ENCODE measurements at regions of chr6 and their contacts with region 1.

Region 1: DNA sequence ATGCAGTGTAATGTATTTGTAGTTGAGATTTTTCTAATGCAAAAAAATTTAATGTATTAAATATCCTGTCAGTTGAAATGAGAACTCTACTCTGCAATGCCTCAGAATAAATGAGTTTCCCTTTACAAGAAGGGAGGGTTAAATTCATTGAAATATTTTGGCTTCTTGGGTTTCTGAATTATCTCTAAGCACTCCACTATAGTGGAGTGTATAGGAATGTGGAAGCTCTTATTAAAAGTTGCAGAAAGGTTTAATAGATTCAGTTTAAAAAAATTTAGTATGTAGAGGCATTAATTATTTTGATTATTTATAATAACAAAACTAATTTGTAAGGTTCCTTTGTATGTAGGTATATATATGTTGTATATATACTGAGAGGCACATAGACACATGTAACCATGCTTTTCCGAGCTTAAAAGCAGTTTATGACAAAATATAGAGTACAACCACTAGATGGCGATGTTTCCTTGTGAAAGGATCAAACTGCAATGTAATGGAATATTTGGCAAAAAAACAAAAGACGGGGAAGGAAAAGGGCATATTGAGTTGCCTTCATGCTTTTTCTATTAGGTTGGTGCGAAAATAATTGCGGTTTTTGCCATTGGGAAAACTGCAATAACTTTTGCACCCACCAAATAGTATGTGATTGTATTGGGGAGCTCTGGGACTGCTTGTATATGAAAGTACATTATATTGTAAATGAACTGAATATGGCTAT is 144.2 kb downstream of the MYO6 start:
- DNase-seq: peak; percentile 81
- H3K4me3 ChIP-seq: no peak overlapping the region
- H3K27ac ChIP-seq: no peak overlapping the region
- H3K4me1 ChIP-seq: no peaks in the 10 kb centered on the region
- H3K27me3 ChIP-seq: no peaks in the 10 kb centered on the region
- CTCF ChIP-seq: peak; percentile 44 to 51
- POLR2A ChIP-seq: no peak

Region 2: DNA sequence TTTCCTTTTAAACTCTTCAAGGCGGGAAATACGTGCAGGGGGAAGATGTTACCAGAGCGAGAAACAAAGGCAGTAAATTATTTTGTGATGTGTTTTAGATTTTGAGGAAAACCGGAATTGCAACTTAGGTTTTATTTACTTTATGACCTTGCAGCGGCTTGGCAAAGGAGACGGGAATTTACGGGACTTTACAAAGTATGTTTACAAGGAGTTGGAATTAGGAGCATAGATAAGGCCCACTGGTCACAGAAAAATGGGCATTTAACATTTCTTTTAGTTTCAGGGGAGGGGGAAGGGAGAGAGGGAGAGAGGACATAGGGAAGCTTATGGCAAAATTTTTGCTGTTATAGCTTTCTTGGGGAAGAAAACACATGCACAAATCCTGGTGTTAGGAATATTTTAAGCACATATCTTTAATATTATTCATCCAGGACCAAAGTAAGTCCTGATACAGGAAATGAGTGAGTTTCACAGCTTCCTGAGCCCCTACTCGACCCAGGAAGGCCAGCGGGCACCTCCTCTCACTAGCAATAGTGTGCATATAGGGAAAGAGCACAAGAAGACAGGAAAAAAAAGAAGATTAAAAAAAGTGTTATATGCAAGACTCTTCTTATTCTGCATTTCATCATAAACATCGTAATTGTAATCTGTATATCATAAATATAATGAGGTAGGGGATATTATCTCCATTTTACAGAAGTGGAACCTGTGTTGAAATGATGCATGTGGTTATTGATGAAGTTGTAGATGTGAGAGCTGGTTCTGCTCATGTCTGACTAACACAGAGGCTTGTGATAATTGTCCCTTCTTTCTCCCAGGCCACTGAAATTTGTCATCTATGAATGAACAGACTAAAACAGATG is 43.3 kb before region 1 on chr6:
- CTCF ChIA-PET with region 1: interaction called, 10 read pairs
- POLR2A ChIA-PET with region 1: no interaction called
- dilution Hi-C with region 1: no loop called
- intact Hi-C with region 1: no loop called
- DNase-seq: peak; percentile 58
- H3K4me3 ChIP-seq: peak overlapping the region in 1 of 3 experiments; percentile 33
- H3K27ac ChIP-seq: peak overlapping the region; percentile 40
- H3K4me1 ChIP-seq: peaks cover 47% of the 10 kb centered on the region
- H3K27me3 ChIP-seq: no peaks in the 10 kb centered on the region
- CTCF ChIP-seq: no peak
- POLR2A ChIP-seq: no peak

Region 3: GRCh38 chr6:75863001-75863400 is 30.2 kb before region 1 on chr6:
- CTCF ChIA-PET with region 1: interaction called, 20 read pairs
- POLR2A ChIA-PET with region 1: no interaction called
- dilution Hi-C with region 1: no loop called
- intact Hi-C with region 1: no loop called
- DNase-seq: no peak
- H3K4me3 ChIP-seq: no peak overlapping the region
- H3K27ac ChIP-seq: no peak overlapping the region
- H3K4me1 ChIP-seq: no peaks in the 10 kb centered on the region
- H3K27me3 ChIP-seq: no peaks in the 10 kb centered on the region
- CTCF ChIP-seq: no peak
- POLR2A ChIP-seq: no peak

Region 4: GRCh38 chr6:75882734-75883133 is 10.5 kb before region 1 on chr6:
- CTCF ChIA-PET with region 1: interaction called, 87 read pairs
- POLR2A ChIA-PET with region 1: no interaction called
- dilution Hi-C with region 1: no loop called
- intact Hi-C with region 1: no loop called
- DNase-seq: no peak
- H3K4me3 ChIP-seq: no peak overlapping the region
- H3K27ac ChIP-seq: no peak overlapping the region
- H3K4me1 ChIP-seq: no peaks in the 10 kb centered on the region
- H3K27me3 ChIP-seq: no peaks in the 10 kb centered on the region
- CTCF ChIP-seq: no peak
- POLR2A ChIP-seq: no peak

Region 5: GRCh38 chr6:75913040-75913439 is 19.8 kb after region 1 on chr6:
- CTCF ChIA-PET with region 1: interaction called, 21 read pairs
- POLR2A ChIA-PET with region 1: no interaction called
- dilution Hi-C with region 1: no loop called
- intact Hi-C with region 1: no loop called
- DNase-seq: no peak
- H3K4me3 ChIP-seq: no peak overlapping the region
- H3K27ac ChIP-seq: no peak overlapping the region
- H3K4me1 ChIP-seq: no peaks in the 10 kb centered on the region
- H3K27me3 ChIP-seq: no peaks in the 10 kb centered on the region
- CTCF ChIP-seq: no peak
- POLR2A ChIP-seq: no peak

Region 6: DNA sequence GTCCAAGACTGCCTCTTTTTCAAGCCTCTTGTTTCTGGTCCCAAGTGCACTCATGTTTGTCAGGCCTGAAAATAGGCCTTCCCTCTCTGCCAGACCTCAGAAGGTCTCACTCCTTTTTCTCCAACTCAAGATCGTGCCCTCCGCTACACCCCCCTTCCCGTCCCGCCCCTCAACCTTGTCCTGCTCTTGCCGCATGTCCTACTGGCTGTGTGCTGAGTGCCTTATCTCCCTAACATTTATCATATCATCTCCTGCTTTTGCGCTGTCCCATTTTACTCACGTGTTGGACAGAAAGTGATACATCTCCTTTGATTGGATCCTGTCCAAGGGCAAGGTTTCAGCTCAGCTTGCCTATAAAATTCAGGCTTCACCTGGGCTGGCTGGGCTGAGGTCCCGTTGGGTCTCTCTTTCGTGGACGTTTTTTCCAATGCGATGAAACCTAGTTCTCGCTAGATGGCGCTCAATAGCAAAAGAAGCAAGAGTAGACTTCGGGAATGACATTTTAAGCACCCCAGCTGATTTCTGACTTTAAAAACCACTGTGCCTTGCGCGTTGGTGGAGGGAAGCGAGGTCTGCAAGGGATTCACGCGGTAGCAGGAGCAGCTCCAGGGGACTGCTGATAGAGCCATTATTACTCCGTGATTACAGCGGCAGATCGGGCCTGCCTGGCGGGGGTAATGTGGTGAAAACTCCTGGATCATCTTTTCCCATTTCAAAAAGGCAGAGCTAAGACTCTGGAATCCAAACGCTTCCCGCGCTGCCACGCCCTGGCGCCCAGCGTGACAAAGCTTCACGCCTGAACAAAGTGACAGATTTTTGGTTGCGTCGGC is 41.6 kb after region 1 on chr6:
- CTCF ChIA-PET with region 1: interaction called, 35 read pairs
- POLR2A ChIA-PET with region 1: no interaction called
- dilution Hi-C with region 1: no loop called
- intact Hi-C with region 1: no loop called
- DNase-seq: peak; percentile 77
- H3K4me3 ChIP-seq: peak overlapping the region in 2 of 3 experiments; percentile 35 to 51
- H3K27ac ChIP-seq: no peak overlapping the region
- H3K4me1 ChIP-seq: peaks cover 4% of the 10 kb centered on the region
- H3K27me3 ChIP-seq: no peaks in the 10 kb centered on the region
- CTCF ChIP-seq: peak; percentile 68 to 75
- POLR2A ChIP-seq: no peak